Right ventricle myocardium inferior (tissue), 1 donor: ENCODE measurements at regions of chr11 and their contacts with region 1.

Region 1: GRCh38 chr11:73779084-73779902 is 8.4 kb upstream of the MRPL48 start:
- DNase-seq: peak; percentile 99
- ATAC-seq: peak; percentile 100

Region 2: DNA sequence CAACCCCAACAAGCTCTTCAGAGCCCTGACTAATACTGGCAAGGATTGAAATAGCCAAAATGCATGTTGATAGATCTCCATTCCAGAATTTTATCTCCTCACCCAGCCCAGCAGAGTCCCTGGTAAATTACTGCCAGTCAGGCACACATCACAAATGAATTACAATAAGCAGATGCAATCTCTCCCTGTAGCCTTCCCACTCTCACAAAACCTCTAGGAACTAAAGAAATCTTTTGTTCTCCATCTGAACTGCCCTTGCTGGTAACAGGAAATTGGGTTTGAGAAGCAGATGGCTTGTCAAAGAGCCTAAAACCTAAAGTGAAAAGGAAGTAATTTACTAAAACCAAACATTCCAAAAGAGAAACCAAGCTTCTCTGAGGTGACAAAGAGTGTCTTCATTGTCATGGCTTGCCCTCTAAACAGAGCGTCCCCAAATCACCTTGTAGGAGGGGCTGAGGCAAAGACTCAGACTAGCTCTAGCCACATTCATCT is 240.9 kb before region 1 on chr11:
- intact Hi-C with region 1: no loop called
- DNase-seq: no peak
- ATAC-seq: no peak

Region 3: DNA sequence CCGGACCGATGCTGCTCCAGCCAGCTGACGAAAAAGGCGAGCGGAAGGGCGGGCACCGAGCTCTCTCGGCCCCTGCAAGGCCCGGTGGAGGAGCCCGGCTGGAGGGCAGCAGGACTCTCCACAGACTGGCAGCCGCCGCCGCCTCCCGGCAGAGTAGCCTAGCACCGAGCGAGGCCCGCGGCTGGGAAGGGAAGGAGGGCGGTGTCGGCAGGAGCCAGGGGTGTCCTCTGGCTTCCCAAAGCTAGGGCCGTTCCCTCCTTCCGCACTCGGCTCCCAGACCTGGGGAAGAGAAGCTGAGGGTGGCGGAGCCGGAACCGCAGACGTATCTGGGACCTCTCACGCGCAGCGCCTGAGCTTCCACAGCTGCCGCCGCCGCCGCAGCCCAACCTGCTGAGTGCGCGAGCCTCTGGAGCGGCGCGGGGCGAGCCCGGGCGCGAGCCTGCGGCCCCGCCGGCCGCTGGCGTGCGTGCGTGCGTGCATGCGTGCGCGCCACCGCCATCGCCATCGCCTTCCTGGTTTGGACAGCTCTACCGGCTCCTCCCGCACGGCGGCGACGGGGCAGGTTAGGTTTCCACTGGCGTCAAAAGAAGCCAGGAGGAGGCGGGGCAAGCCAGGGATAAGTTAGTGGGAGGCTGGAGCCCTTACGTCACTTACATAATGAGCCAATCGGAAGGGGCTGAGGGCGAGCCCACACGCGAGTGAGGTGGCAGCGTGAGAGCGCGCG is 18.5 kb before region 1 on chr11 and contains the start of gene RAB6A:
- intact Hi-C with region 1: loop called (anchors 1 kb)
- DNase-seq: peak; percentile 100
- ATAC-seq: peak; percentile 96
- total RNA-seq, gene RAB6A: 97.1 TPM

Region 4: GRCh38 chr11:73950869-73951710 is 171.8 kb after region 1 on chr11 and contains the start of gene DNAJB13:
- intact Hi-C with region 1: no loop called
- DNase-seq: no peak
- ATAC-seq: no peak
- total RNA-seq, gene DNAJB13: not detected